ENCODE measurements at regions of chr9 and their contacts with region 1.

Region 1: DNA sequence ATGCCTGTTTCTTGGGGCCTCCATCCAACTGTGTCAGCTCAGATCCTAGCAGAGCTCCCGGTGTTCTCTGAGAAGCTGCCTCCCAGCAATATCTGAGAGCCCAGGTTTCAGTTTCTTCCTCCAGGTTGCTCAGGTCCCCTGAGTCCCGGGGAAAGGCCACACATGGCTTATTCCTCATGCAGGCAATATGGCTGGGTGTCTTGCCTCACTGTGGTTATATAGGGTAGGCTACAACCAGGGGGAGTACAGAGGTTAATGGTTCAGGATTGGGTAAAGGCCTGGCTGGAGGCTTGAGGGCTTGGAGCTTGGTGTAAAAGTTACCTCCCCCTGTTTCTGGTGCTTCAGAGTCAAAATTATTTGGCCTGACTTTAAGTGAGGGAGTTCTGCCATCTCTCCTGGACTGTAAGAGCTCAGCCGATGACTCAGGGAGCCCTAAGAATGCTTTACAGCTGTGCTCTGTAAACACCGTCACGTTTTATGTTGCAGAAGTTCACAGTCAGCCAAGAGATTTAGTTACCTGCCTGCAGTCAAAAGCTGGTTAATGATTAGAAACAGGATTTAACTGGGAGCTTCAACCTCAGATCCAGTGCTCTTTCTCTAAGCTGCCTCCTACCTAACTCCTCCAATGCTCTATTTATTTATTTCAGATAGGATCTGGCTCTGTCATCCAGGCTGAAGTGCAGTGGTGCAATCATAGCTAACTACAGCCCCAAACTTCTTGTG is 24.3 kb upstream of the UBAP2 start:
- DNase-seq: peak; percentile 55
- H3K4me3 ChIP-seq: no peak overlapping the region
- H3K27ac ChIP-seq: peak overlapping the region; percentile 58 to 79 (median 70)
- H3K4me1 ChIP-seq: peaks cover 18 to 24% (median 19%) of the 10 kb centered on the region in 4 donors
- H3K27me3 ChIP-seq: no peaks in the 10 kb centered on the region
- CTCF ChIP-seq: no peak
- EP300 ChIP-seq: no peak
- POLR2A ChIP-seq: no peak

Region 2: DNA sequence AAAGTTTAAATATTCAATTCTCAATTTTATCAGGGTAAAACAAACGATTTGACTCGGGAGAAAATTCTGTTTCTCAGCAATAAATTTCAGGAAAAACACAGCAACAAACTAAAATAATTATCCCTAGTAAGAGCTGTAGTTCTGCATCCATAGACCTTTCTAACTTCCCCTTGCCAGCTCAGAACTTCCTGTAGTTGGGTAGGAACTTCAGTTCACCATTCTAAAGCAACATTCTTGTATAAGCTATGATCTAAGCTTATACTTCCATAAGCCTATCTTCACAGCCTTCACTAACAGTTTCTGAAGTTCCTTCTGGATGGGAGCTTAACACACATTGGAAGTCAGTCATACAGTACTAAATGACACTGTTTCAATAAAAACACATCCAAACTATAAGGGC is 121.0 kb before region 1 on chr9:
- in situ Hi-C with region 1: no loop called
- intact Hi-C with region 1: no loop called
- DNase-seq: no peak
- H3K4me3 ChIP-seq: no peak overlapping the region
- H3K27ac ChIP-seq: no peak overlapping the region
- H3K4me1 ChIP-seq: peaks cover 0 to 3% (median 0%) of the 10 kb centered on the region in 4 donors
- H3K27me3 ChIP-seq: no peaks in the 10 kb centered on the region
- CTCF ChIP-seq: no peak
- EP300 ChIP-seq: no peak
- POLR2A ChIP-seq: no peak

Region 3: DNA sequence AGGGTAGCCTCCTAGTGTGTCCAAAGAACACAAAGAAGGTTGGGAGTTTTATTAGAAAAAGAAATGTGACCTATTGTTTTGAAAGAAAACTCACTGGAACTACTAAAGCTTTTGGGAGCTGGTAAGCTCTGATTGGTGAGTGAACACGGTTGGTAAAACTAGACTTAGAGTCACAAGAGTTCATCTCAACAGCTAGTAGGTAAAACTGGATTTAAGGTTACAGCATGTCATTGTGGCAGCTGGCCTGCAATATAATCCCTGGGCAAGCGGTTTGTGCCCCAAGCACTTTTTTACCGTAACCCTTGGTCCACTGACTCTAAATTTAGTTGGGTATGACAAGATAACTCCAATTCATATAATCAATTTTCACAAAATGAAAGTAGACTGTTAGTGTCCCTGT is 71.7 kb before region 1 on chr9:
- in situ Hi-C with region 1: loop called in 1 of 4 experiments (anchors 10 kb)
- intact Hi-C with region 1: no loop called
- DNase-seq: no peak
- H3K4me3 ChIP-seq: no peak overlapping the region
- H3K27ac ChIP-seq: no peak overlapping the region
- H3K4me1 ChIP-seq: no peaks in the 10 kb centered on the region
- H3K27me3 ChIP-seq: no peaks in the 10 kb centered on the region
- CTCF ChIP-seq: no peak
- EP300 ChIP-seq: no peak
- POLR2A ChIP-seq: no peak